HEK293 (cell line): ENCODE measurements at regions of chr2 and their contacts with region 1.

Region 1: GRCh38 chr2:172931918-172932520 is 143.6 kb upstream of the MAP3K20 start:
- H3K4me3 ChIP-seq: no peak overlapping the region
- H3K27ac ChIP-seq: no peak overlapping the region
- H3K4me1 ChIP-seq: peaks cover 27% of the 10 kb centered on the region
- CTCF ChIP-seq: no peak; the same call in 1 of the 2 replicates

Region 2: DNA sequence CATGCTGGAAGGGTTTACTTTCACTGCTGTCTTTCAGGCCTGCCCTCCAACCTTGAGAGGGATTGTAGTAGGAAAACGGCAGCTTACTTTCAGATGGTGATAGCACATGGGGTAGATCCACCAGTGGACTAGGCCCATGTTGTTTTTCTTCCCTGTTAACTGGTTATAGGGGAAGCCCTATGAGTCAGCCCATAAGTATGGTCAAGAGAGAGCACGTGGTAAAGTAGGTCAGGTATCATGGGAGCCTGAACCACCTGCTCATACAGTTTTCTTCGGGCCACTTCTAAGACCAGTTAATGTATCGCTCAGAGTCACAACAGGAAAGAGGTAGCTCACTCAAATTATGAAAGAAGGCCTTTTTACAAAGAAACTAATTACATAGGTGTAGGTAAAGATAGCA is 343.1 kb before region 1 on chr2:
- CTCF ChIA-PET with region 1: interaction called, 10 read pairs
- POLR2A ChIA-PET with region 1: no interaction called
- H3K4me3 ChIP-seq: no peak overlapping the region
- H3K27ac ChIP-seq: no peak overlapping the region
- H3K4me1 ChIP-seq: no peaks in the 10 kb centered on the region
- CTCF ChIP-seq: no peak

Region 3: DNA sequence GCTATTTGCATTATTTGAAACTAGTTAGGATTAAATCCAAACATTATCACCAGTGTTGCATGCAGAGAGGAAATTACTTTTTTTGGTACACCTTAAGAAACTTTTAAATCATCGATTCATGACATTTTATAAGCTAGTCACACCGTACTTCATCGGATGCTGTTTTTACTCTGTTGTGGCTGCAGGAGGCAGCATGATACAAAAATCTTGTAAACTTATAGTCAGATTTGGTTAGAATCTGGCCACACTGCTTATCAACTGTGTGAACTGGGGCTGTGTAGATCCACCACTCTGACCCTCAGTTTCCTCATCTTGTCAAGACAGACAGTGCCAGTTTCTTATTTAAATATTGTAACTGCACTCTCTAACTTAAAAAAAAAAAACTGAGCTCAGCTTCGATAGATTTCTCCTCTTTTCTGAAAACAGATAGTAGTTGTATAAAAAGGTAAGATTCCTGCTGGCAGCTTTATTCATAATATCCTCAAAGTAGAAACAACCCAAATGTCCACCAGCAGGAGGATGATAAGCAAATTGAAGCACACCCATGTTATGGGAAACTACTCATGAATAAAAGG is 118.6 kb before region 1 on chr2:
- CTCF ChIA-PET with region 1: interaction called, 154 read pairs
- POLR2A ChIA-PET with region 1: interaction called, 5 read pairs
- H3K4me3 ChIP-seq: no peak overlapping the region
- H3K27ac ChIP-seq: no peak overlapping the region
- H3K4me1 ChIP-seq: 0 out of 2 replicates have a peak, but pooled peaks cover 3% of the 10 kb centered on the region
- CTCF ChIP-seq: no peak

Region 4: DNA sequence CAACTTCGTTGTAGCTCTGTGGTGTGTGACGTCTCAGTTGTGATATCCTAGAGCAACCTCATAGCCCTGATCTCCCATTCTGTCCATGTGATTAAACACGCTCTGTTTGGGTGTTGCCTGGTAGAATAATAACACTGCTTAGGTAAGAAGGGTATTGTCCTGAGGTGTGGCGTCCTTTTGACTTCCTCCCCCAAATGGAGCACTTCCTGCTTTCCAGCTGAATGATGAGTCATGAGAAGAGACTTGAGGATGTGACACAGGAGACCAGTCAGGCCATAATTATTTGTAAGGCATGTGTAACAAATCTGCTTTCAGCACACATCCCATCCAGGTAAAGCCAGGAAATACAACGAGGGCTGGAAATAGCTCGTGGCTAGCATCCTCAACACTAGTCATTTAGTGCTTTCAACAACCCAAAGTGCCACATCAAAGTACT is 95.6 kb before region 1 on chr2:
- CTCF ChIA-PET with region 1: interaction called, 11 read pairs
- POLR2A ChIA-PET with region 1: no interaction called
- H3K4me3 ChIP-seq: no peak overlapping the region
- H3K27ac ChIP-seq: no peak overlapping the region
- H3K4me1 ChIP-seq: no peaks in the 10 kb centered on the region
- CTCF ChIP-seq: no peak

Region 5: DNA sequence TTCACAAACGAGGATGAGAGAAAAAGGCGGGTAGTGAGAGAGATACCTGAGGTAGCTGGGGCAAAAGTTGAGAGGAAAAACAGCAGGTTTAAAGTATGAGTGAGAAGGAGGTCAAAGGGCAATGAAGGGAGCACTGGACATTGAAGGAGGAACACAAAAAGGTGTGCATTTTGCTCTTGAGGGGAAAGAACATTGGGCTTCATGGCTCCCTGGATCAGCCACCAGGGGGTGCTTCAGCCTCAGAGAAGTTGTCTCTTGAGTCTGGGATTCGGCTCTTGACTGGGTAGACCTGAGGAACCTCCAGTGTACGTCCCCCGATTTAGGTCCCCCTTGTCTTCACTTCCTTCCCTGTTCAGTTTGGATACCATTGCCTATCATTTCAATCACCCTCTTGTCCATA is 67.8 kb before region 1 on chr2:
- CTCF ChIA-PET with region 1: interaction called, 26 read pairs
- POLR2A ChIA-PET with region 1: no interaction called
- H3K4me3 ChIP-seq: no peak overlapping the region
- H3K27ac ChIP-seq: no peak overlapping the region
- H3K4me1 ChIP-seq: peaks cover 9% of the 10 kb centered on the region
- CTCF ChIP-seq: peak; percentile 72

Region 6: GRCh38 chr2:172921532-172922236 is 10.3 kb before region 1 on chr2:
- CTCF ChIA-PET with region 1: interaction called, 22 read pairs
- POLR2A ChIA-PET with region 1: no interaction called
- H3K4me3 ChIP-seq: no peak overlapping the region
- H3K27ac ChIP-seq: no peak overlapping the region
- H3K4me1 ChIP-seq: peaks cover 6% of the 10 kb centered on the region
- CTCF ChIP-seq: no peak

Region 7: DNA sequence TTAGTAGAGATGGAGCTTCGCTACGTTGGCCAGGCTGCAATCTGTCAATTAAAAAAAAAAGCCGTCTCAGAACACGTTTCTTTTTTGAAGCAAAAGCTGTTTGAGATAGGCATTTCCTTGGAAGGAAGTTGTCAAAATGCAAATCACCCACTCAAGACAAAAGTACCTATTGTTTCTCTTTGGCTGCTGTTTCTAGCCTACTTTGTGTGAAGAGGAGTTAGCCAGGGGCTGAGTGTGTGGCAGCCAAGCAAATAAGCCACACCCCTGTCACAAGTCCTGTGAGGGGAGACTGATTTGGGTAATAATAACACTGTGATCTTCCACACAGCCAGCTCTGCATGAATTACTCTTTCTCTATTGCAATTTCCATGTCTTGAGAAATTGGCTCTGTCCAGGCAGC is 375.3 kb after region 1 on chr2:
- CTCF ChIA-PET with region 1: no interaction called
- POLR2A ChIA-PET with region 1: no interaction called
- H3K4me3 ChIP-seq: no peak overlapping the region
- H3K27ac ChIP-seq: no peak overlapping the region
- H3K4me1 ChIP-seq: no peaks in the 10 kb centered on the region
- CTCF ChIP-seq: no peak